ENCODE measurements at regions of chr7 and their contacts with region 1.

Region 1: GRCh38 chr7:126727925-126728391 is 524.8 kb downstream of the GRM8 start:
- DNase-seq: no peak
- H3K4me3 ChIP-seq: no peak overlapping the region
- H3K27ac ChIP-seq: no peak overlapping the region
- H3K4me1 ChIP-seq: no peaks in the 10 kb centered on the region
- H3K27me3 ChIP-seq: no peaks in the 10 kb centered on the region
- CTCF ChIP-seq: no peak

Region 2: GRCh38 chr7:126750207-126750911 is 22.4 kb after region 1 on chr7:
- intact Hi-C with region 1: loop called (anchors 1 kb)
- DNase-seq: no peak
- H3K4me3 ChIP-seq: no peak overlapping the region
- H3K27ac ChIP-seq: no peak overlapping the region
- H3K4me1 ChIP-seq: no peaks in the 10 kb centered on the region
- H3K27me3 ChIP-seq: no peaks in the 10 kb centered on the region
- CTCF ChIP-seq: no peak

Region 3: DNA sequence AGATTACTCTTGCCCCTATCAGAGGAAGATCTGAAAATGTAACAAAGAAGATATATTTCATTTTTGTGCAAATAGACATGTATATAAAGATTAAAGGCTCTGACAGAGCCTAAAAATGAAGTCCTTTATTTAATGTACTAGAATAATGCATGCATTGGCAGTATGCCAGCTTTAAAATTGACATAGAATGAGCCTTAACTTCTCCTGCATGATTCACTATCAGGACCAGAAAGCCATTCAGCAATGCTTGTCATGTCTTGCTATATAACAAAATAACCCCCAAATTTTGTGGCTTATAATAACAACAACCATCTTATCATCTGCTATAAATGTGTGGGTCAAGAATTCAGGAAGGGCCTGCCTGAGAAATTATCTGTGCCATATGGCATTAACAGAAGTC is 112.9 kb after region 1 on chr7:
- intact Hi-C with region 1: no loop called
- DNase-seq: no peak
- H3K4me3 ChIP-seq: no peak overlapping the region
- H3K27ac ChIP-seq: no peak overlapping the region
- H3K4me1 ChIP-seq: no peaks in the 10 kb centered on the region
- H3K27me3 ChIP-seq: no peaks in the 10 kb centered on the region
- CTCF ChIP-seq: no peak

Region 4: GRCh38 chr7:127035203-127035849 is 307.4 kb after region 1 on chr7:
- intact Hi-C with region 1: no loop called
- DNase-seq: no peak
- H3K4me3 ChIP-seq: no peak overlapping the region
- H3K27ac ChIP-seq: no peak overlapping the region
- H3K4me1 ChIP-seq: no peaks in the 10 kb centered on the region
- H3K27me3 ChIP-seq: no peaks in the 10 kb centered on the region
- CTCF ChIP-seq: no peak

Measured in tibial artery (tissue), 4 donors.